Mammary epithelial cell (primary cell): ENCODE measurements at regions of chr12 and their contacts with region 1.

Region 1: DNA sequence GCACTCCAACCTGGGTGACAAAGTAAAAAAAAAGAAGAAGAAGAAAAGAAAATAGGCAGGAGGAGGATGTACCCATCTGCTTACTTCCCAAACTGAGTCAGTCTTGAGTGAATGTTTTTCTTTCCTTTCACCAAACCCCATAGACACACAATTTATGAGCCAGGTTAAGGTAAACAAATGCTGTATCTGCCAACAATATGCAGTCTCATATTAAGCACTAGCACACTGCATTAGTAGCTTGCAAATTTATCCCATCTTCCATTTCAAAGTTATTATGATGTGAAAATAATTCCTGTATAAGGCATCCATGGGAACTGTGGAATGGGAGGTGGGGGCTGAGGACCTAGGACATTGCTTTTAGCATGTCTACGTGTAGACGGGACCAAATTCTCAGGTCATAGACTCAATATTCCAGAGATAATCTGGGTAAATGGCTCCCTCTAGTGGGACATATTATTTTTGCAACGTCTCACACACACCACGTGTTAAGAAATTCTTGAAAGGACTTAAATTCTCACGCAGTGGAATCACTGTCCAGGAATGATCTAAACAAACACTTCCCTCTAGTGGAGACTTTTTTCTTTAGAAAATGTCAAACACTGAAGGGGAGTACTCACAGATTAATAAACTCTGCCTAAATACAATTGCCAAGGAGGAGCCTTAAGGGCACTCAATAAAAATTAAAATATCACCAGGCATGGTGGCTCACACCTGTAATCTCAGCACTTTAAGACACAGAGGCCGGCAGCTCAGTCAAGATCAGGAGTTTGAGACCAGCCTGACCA is 17.1 kb upstream of the OR10P1 start:
- DNase-seq: peak; percentile 83
- H3K4me3 ChIP-seq: no peak overlapping the region
- H3K27ac ChIP-seq: no peak overlapping the region
- H3K4me1 ChIP-seq: no peaks in the 10 kb centered on the region
- H3K27me3 ChIP-seq: no peaks in the 10 kb centered on the region
- CTCF ChIP-seq: peak; percentile 71 to 72

Region 2: GRCh38 chr12:54993161-54993835 is 626.2 kb before region 1 on chr12:
- CTCF ChIA-PET with region 1: no interaction called
- dilution Hi-C with region 1: no loop called
- in situ Hi-C with region 1: no loop called
- intact Hi-C with region 1: loop called (anchors 2 kb)
- DNase-seq: peak; percentile 41
- H3K4me3 ChIP-seq: no peak overlapping the region
- H3K27ac ChIP-seq: no peak overlapping the region
- H3K4me1 ChIP-seq: no peaks in the 10 kb centered on the region
- H3K27me3 ChIP-seq: no peaks in the 10 kb centered on the region
- CTCF ChIP-seq: peak; percentile 77 to 83

Region 3: DNA sequence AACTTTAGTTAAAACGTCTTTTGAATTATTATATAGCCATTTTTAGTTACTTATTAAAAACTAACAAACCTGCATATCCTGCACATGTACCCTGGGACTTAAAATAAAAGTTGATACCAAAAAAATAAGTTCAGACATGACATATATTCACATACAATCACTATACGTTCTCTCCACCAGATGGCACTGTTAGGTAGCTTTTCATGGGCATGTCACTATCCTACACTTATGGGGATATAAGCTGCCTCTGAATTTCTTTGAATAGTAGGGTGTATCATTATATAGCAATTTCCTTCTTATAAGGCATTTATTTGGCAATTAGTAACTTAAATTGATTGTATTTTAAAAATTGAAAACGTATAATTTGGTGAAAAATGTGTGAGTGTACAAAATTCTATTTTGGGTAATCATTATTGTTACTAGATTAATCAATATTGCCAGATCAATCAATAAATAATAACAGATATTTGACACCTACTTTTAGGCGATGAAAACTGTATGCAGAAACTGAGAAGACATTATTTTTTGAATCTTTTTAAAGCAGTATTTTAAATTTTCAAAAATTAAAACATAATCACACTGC is 430.5 kb before region 1 on chr12:
- CTCF ChIA-PET with region 1: no interaction called
- dilution Hi-C with region 1: no loop called
- in situ Hi-C with region 1: loop called (anchors 10 kb)
- intact Hi-C with region 1: loop called (anchors 1 kb)
- DNase-seq: peak; percentile 55
- H3K4me3 ChIP-seq: no peak overlapping the region
- H3K27ac ChIP-seq: no peak overlapping the region
- H3K4me1 ChIP-seq: no peaks in the 10 kb centered on the region
- H3K27me3 ChIP-seq: peaks cover 5% of the 10 kb centered on the region
- CTCF ChIP-seq: peak; percentile 60 to 66

Region 4: DNA sequence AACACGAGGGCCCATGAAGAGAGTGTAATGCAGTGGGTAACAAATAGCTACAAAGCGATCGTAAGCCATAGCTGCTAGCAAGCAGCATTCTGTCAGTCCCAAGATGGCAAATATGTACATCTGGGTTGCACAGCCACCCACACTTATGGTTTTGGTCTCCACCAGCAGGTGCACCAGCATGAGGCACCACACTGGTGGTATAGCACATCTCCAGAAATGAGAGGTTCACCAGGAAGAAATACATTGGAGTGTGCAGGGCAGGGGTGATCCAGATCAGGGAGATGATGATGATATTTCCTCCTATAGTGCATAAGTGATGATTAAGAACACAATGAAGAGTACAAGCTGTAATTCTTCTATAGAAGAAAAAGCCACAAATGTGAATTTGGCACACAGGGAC is 425.2 kb before region 1 on chr12:
- CTCF ChIA-PET with region 1: no interaction called
- dilution Hi-C with region 1: no loop called
- in situ Hi-C with region 1: loop called (anchors 10 kb)
- intact Hi-C with region 1: loop called (anchors 1 kb)
- DNase-seq: no peak
- H3K4me3 ChIP-seq: no peak overlapping the region
- H3K27ac ChIP-seq: no peak overlapping the region
- H3K4me1 ChIP-seq: no peaks in the 10 kb centered on the region
- H3K27me3 ChIP-seq: no peaks in the 10 kb centered on the region
- CTCF ChIP-seq: no peak

Region 5: GRCh38 chr12:55446326-55446725 is 173.2 kb before region 1 on chr12:
- CTCF ChIA-PET with region 1: no interaction called
- dilution Hi-C with region 1: no loop called
- in situ Hi-C with region 1: no loop called
- intact Hi-C with region 1: loop called (anchors 1 kb)
- DNase-seq: no peak
- H3K4me3 ChIP-seq: no peak overlapping the region
- H3K27ac ChIP-seq: no peak overlapping the region
- H3K4me1 ChIP-seq: no peaks in the 10 kb centered on the region
- H3K27me3 ChIP-seq: peaks cover 5% of the 10 kb centered on the region
- CTCF ChIP-seq: peak in 1 of 2 donors; percentile 25